ENCODE measurements at regions of chr3 and their contacts with region 1.

Region 1: DNA sequence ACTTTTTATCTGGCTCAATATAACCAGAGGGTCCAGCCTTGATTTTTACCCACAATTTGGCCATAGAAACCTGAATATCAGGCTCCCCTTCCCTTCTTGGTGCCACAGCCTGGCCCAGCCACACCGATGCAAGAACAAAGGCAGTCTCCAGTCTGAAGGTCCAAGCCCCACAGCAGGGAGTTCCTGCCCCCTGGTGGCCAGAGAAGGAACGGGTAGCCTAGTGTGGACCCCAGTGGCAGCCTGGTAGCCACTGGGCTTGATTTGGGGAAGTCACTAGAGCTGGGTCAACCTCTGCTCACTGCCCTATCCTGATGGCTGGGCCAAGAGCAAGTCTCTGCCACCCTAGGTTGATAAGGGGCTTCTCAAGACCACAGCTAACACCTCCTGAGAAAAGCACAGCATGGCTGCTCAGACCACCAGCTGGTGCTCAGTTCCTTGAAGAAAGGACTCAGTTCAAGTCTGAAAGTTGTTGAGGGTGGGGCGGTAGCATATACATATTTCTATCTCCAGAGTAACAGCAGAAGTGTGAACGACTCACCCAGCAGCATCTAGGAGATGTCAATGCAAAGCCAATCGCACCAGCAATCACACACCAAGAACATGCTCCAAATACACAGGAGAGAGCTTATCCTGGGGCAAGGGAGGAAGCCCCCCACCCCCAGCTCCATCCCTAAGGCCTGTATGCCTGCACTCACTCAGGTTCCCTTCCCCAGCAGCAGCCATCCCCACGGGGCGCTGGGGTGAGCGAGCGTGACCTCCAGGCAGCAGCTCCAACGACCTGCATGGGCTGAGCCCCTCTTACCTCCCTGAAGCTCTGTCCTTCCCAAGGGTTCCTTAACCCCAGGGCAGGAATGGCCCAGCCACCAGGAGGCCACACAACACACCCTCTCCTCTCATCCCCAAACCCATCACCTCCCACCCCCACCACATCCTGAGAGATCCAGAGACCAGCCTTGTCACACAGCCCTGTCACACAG is 7.6 kb downstream of the PFKFB4 start:
- DNase-seq: peak; percentile 46 to 94
- H3K4me3 ChIP-seq: no peak overlapping the region
- H3K27ac ChIP-seq: no peak overlapping the region
- H3K4me1 ChIP-seq: no peaks in the 10 kb centered on the region
- H3K27me3 ChIP-seq: no peaks in the 10 kb centered on the region
- CTCF ChIP-seq: peak; percentile 91 to 96 (median 94)

Region 2: DNA sequence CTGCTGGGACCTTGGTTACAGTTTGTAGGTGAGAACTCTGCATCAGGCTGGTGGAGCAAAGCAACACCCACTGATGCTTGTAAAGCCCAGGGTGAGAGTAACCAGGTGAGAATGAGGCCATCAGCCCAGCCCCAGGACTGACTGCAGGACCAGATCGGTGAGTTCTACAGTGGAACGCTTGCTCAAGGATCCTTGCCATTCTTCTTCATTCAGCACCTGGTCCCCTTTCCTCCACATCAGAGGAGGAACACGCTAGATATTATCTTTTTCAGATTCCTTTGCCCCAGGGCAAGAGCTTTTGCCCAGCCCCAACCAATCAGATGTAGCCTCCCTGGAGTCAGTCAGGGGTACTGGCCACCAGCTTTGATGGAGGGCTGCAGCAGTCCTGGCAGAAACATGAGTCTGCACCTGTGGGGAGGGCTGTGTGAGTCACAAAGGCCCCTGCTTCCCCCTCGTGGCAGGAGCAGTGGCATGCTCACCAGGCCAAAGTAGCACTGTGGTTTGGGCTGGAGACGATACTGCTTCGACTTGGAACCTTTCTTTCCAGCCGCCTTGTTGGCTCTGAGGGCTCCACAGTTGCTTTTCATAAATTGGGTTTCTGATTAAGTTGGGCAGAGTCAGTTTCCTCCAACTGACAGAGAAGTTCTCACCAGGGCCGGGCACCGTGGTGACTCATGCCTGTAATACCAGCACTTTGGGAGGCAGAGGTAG is 41.5 kb before region 1 on chr3:
- intact Hi-C with region 1: loop called (anchors 1 kb)
- DNase-seq: peak; percentile 35 to 81
- H3K4me3 ChIP-seq: no peak overlapping the region
- H3K27ac ChIP-seq: peak overlapping the region; percentile 69 to 76
- H3K4me1 ChIP-seq: peaks cover 0 to 23% of the 10 kb centered on the region in 2 donors
- H3K27me3 ChIP-seq: no peaks in the 10 kb centered on the region
- CTCF ChIP-seq: peak; percentile 34 to 58 (median 52)

Region 3: GRCh38 chr3:48623851-48624547 is 75.0 kb after region 1 on chr3:
- intact Hi-C with region 1: no loop called
- DNase-seq: no peak
- H3K4me3 ChIP-seq: no peak overlapping the region
- H3K27ac ChIP-seq: no peak overlapping the region
- H3K4me1 ChIP-seq: peaks cover 14 to 20% of the 10 kb centered on the region in 2 donors
- H3K27me3 ChIP-seq: no peaks in the 10 kb centered on the region
- CTCF ChIP-seq: no peak

Measured in ascending aorta (tissue), 2 donors.